Activated CD4-positive, alpha-beta T cell treated with anti-CD3 and anti-CD28 coated beads, Interleukin-2, amount 10 ng/mL, durations not matched to agents 24 days and 14 days (primary cell): ENCODE measurements at regions of chr10 and their contacts with region 1.

Region 1: GRCh38 chr10:62816331-62817120 is at the start of gene EGR2:
- DNase-seq: peak; percentile 98
- H3K4me3 Mint-ChIP-seq: peak within 1 kb of the TSS; percentile 97
- H3K27ac Mint-ChIP-seq: peak within 1 kb of the TSS; percentile 100
- H3K4me1 Mint-ChIP-seq: peaks cover 50% of the 10 kb centered on the region
- H3K27me3 Mint-ChIP-seq: peaks cover 30% of the 10 kb centered on the region
- total RNA-seq, gene EGR2: 178 and 201 TPM in 2 replicates

Region 2: GRCh38 chr10:62183442-62183841 is 633.1 kb before region 1 on chr10:
- intact Hi-C with region 1: loop called (anchors 10 kb)
- DNase-seq: peak; percentile 90
- H3K4me3 Mint-ChIP-seq: peak overlapping the region; percentile 41
- H3K27ac Mint-ChIP-seq: peak overlapping the region; percentile 92
- H3K4me1 Mint-ChIP-seq: peaks cover 68% of the 10 kb centered on the region
- H3K27me3 Mint-ChIP-seq: no peaks in the 10 kb centered on the region

Region 3: GRCh38 chr10:62610649-62611229 is 205.8 kb before region 1 on chr10:
- intact Hi-C with region 1: loop called (anchors 1 kb)
- DNase-seq: peak; percentile 93
- H3K4me3 Mint-ChIP-seq: no peak overlapping the region
- H3K27ac Mint-ChIP-seq: peak overlapping the region; percentile 27
- H3K4me1 Mint-ChIP-seq: peaks cover 46% of the 10 kb centered on the region
- H3K27me3 Mint-ChIP-seq: peaks cover 5% of the 10 kb centered on the region

Region 4: GRCh38 chr10:62779487-62780248 is 36.9 kb before region 1 on chr10:
- intact Hi-C with region 1: loop called (anchors 1 kb)
- DNase-seq: peak; percentile 84
- H3K4me3 Mint-ChIP-seq: peak overlapping the region; percentile 42
- H3K27ac Mint-ChIP-seq: peak overlapping the region; percentile 68
- H3K4me1 Mint-ChIP-seq: peaks cover 31% of the 10 kb centered on the region
- H3K27me3 Mint-ChIP-seq: peaks cover 12% of the 10 kb centered on the region

Region 5: DNA sequence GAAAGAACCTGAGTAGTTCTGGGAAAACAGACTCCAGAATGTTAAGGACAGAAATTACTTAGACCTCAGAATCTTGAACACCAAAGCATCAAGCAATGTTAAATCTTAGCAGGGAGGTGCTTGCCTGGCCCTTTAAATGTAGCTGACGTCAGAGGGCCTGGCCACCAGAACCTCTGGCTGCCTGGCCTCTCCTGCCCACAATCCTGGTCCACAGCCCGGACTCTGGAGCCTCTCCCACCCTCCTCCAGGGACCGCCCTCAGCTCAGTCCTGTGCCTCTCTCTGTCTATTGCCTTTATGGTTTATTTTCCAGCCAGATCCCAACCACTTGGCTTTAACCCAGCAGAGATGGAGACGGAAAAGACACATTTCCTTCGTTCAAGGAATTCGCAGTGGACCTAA is 41.8 kb after region 1 on chr10:
- intact Hi-C with region 1: loop called (anchors 1 kb)
- DNase-seq: no peak
- H3K4me3 Mint-ChIP-seq: no peak overlapping the region
- H3K27ac Mint-ChIP-seq: no peak overlapping the region
- H3K4me1 Mint-ChIP-seq: peaks cover 60% of the 10 kb centered on the region
- H3K27me3 Mint-ChIP-seq: peaks cover 4% of the 10 kb centered on the region

Region 6: DNA sequence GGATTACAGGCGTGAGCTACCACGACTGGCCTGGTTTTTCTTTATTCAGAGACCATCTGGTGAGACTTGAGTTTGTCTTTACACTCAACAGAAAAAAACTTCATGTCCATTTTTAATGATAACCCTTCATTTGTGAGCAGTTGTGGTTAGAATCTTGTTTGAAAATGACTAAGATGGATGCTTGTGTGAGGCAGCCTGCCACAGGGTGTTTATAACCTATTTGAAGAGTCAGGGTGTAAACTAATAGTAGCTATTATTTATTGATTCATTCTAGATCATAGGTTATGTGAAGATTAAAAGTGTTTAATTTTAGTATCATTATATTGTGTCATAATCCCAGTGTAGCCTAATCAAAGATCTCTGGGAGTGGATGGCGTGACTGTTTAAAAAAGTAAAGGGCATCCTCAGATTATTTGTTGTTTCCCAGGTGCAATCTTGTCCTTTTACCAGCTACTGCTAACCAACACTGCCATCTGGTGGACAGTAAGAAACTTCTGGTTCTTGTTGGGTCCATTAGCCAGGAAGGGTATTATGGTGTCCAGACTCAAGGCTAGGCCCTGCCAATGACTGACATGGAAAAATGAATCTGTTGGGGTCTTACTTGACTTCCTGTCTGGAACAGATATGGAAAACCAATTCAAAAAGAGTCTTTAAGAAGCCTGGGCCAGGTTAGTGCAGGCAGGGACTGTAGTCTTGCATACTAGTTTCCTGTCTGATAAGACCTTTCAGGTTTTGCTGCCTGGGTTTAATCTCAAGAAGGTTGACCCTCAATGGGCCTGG is 341.5 kb after region 1 on chr10:
- intact Hi-C with region 1: loop called (anchors 1 kb)
- DNase-seq: peak; percentile 84
- H3K4me3 Mint-ChIP-seq: no peak overlapping the region
- H3K27ac Mint-ChIP-seq: no peak overlapping the region
- H3K4me1 Mint-ChIP-seq: peaks cover 19% of the 10 kb centered on the region
- H3K27me3 Mint-ChIP-seq: no peaks in the 10 kb centered on the region